HCT116 (cell line): ENCODE measurements at regions of chr11 and their contacts with region 1.

Region 1: DNA sequence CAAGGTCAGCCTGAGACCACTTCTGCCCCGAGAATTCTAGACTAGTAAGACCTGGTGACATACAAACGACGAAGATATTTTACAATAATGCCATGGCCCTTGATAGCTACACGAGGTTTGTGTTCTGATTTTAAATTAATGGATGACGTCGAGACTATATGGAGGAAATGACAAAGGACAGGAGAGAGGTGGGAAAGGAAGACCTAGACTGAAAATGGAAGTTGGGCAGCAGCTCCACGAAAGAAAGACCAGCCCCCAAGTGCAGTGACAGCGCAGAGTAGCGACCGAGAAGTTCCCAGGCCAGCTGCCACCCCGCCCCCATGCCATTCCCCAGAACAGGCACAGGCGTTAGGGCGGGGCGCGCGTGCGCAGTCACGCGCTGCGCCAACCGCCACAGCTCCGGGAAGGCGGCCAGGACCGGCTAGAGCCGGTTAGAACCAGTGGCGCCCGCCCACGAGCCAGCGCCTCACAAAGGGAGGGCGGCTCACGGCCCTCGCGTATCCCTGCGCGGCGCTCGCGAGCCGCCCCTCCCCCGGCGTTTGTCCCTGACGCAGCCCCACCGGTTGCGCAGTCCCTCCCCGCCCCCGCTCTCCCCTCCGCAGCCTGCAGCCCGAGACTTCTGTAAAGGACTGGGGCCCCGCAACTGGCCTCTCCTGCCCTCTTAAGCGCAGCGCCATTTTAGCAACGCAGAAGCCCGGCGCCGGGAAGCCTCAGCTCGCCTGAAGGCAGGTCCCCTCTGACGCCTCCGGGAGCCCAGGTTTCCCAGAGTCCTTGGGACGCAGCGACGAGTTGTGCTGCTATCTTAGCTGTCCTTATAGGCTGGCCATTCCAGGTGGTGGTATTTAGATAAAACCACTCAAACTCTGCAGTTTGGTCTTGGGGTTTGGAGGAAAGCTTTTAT is 1.5 kb upstream of the MALAT1 start:
- DNase-seq: peak; percentile 96
- ATAC-seq: peak; percentile 75
- H3K4me3 ChIP-seq: peak overlapping the region; percentile 57 to 79
- H3K27ac ChIP-seq: peak overlapping the region; percentile 98
- H3K4me1 ChIP-seq: peaks cover 49 to 86% of the 10 kb centered on the region in 2 experiments
- H3K27me3 ChIP-seq: no peaks in the 10 kb centered on the region
- CTCF ChIP-seq: no peak
- POLR2A ChIP-seq: no peak
- RAD21 ChIP-seq: no peak

Region 2: DNA sequence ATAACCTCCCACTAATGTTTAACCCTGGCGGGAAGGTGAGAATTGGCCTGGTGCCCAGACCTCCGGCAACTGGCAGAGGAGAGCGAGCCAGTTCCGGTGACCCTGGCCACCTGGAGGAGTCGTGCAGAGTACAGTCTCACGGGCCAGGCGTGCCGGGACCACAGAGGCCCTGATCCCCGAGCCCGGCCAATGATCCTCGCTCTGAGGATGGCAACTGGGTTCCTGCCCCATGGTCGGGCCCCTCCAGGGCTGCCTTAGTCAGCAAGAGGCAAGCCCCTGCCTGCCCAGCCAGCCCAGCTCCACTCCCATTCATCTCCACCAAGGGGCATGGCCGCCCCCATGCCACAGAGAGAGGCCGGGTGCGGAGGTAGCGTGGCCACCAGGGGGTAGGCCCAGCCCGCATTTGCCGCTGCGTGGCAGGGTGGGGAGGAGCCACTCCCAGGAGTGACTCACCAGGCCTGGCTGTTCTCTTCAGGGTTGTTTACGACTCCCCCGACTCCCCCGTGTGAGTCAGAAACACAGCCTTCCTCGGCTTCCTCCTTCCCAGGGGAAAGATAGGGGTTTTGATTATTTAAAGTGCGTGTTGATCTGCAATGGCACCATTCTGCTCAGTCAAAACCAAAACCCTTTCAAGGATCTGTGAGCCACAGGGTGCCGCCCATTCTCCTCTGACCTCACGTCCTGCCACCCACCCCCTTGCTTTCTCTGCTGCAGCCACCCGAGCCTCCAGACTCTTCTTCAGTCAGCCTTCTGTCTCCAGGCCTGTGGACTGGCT is 115.2 kb before region 1 on chr11 and contains the start of gene SLC25A45:
- CTCF ChIA-PET with region 1: no interaction called
- POLR2A ChIA-PET with region 1: interaction called, 20 read pairs
- RAD21 ChIA-PET with region 1: interaction called in 1 of 2 experiments, 3 read pairs
- intact Hi-C with region 1: no loop called
- DNase-seq: peak; percentile 92
- ATAC-seq: peak; percentile 83
- H3K4me3 ChIP-seq: peak within 1 kb of the TSS; percentile 46 to 55
- H3K27ac ChIP-seq: peak within 1 kb of the TSS; percentile 99
- H3K4me1 ChIP-seq: peaks cover 55 to 69% of the 10 kb centered on the region in 2 experiments
- H3K27me3 ChIP-seq: no peaks in the 10 kb centered on the region
- CTCF ChIP-seq: peak in 2 of 3 experiments; percentile 63 to 75; a peak in 4 of 6 replicates
- POLR2A ChIP-seq: no peak
- RAD21 ChIP-seq: no peak
- total RNA-seq, gene SLC25A45: 3.9 TPM

Region 3: DNA sequence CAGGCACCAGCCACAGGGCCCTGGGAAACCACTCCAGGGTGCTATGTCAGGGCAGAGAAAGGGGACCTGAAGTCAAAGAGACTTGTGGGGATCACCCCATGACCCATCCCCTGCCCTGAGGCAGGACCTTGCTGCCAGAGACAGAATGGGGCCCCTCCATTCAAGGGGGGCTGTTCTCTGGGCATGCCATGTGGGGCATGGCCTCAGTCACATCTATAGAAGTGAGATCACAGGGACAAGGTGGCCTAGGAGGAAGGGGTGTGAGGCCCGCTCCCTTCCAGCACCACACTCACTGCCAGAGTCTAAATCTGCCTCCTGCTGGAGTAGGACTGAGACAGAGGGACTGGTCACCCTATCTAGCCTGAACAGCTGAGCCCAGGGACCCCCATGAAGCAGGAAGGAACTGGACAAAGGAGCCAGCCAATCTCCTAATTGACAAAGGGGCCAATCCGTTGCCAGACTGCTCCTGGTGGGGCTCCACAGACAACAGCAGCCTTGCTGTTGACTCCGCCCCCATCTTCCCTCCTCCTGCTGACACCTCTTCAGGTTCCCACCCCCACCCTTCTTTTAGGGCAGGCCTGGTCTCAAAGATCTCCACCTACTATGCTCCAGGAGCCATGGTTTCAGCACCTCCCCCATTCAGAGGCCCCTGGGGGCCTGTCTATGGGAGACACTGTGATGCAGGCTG is 48.8 kb before region 1 on chr11:
- CTCF ChIA-PET with region 1: no interaction called
- POLR2A ChIA-PET with region 1: interaction called, 33 read pairs
- RAD21 ChIA-PET with region 1: no interaction called
- intact Hi-C with region 1: no loop called
- DNase-seq: no peak
- ATAC-seq: peak; percentile 43; the same call in 1 of the 2 replicates
- H3K4me3 ChIP-seq: no peak overlapping the region
- H3K27ac ChIP-seq: no peak overlapping the region
- H3K4me1 ChIP-seq: peaks cover 11 to 21% of the 10 kb centered on the region in 2 experiments; a peak in 3 of 4 replicates
- H3K27me3 ChIP-seq: no peaks in the 10 kb centered on the region
- CTCF ChIP-seq: no peak
- POLR2A ChIP-seq: no peak
- RAD21 ChIP-seq: no peak

Region 4: GRCh38 chr11:65471410-65471762 is 26.0 kb before region 1 on chr11:
- CTCF ChIA-PET with region 1: interaction called, 11 read pairs
- POLR2A ChIA-PET with region 1: interaction called, 1,499 read pairs
- RAD21 ChIA-PET with region 1: interaction called, 4 to 27 read pairs
- intact Hi-C with region 1: loop called (anchors 2 kb)
- DNase-seq: no peak
- ATAC-seq: peak; percentile 73
- H3K4me3 ChIP-seq: peak overlapping the region in 1 of 2 experiments; percentile 31; a peak in 2 of 4 replicates
- H3K27ac ChIP-seq: peak overlapping the region; percentile 97
- H3K4me1 ChIP-seq: peaks cover 65 to 81% of the 10 kb centered on the region in 2 experiments
- H3K27me3 ChIP-seq: no peaks in the 10 kb centered on the region
- CTCF ChIP-seq: peak in 2 of 3 experiments; percentile 64 to 69; a peak in 4 of 6 replicates
- POLR2A ChIP-seq: no peak
- RAD21 ChIP-seq: no peak

Region 5: GRCh38 chr11:65662799-65663638 is 165.6 kb after region 1 on chr11 and contains the start of gene RELA:
- CTCF ChIA-PET with region 1: no interaction called
- POLR2A ChIA-PET with region 1: no interaction called
- RAD21 ChIA-PET with region 1: no interaction called
- intact Hi-C with region 1: no loop called
- DNase-seq: peak; percentile 84
- ATAC-seq: peak; percentile 88
- H3K4me3 ChIP-seq: peak within 1 kb of the TSS; percentile 86 to 100
- H3K27ac ChIP-seq: peak within 1 kb of the TSS; percentile 95
- H3K4me1 ChIP-seq: peaks cover 17 to 24% of the 10 kb centered on the region in 2 experiments
- H3K27me3 ChIP-seq: no peaks in the 10 kb centered on the region
- CTCF ChIP-seq: no peak
- POLR2A ChIP-seq: peak; percentile 82
- RAD21 ChIP-seq: no peak
- total RNA-seq, gene RELA: 78.5 TPM